Activated T-helper 1 cell treated with anti-CD3 and anti-CD28 coated beads, Interleukin-12 subunit alpha, Interleukin-12 subunit beta, Interleukin-2, Interleukin-4 antibody, amounts not matched to agents 30 ng/mL and 10 ng/mL and 1 ng/mL, durations not matched to agents 14 hours and 24 hours and 36 hours (primary cell): ENCODE measurements at regions of chr13 and their contacts with region 1.

Region 1: DNA sequence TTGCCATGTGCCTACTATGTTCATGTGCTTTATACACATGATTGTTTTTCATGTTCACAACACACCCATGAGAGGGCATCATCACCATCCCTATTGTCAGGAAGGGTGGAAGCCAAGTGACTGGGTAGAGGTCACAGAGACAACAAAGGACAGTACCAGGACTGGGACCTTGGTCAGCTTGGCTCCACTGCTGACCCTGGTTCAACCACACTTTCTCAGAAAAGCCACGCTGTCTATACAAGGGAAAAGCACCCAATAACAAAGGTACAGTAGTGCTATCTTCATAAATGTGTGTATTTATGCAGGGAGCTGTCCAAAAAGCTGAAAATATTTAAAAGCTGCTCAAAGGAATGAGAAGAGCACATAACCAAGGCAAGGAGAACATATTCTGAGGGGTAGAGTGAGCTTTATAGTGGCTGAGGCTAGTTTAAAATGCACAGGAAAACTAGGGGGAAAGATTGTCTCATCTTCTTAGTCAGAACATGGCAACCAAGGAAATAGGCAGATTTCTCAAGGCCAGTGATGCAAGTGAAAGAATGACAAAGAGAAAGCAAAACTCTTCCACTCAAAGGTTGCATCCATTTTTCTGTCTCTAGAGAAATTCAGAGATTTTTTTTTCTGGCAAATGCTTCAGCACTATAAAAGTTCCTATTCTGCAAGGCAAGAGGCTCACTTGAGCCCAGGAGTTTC is 415.0 kb downstream of the FOXO1 start:
- DNase-seq: peak; percentile 4
- H3K4me3 Mint-ChIP-seq: no peak overlapping the region
- H3K27ac Mint-ChIP-seq: peak overlapping the region; percentile 78
- H3K4me1 Mint-ChIP-seq: peaks cover 39% of the 10 kb centered on the region
- H3K27me3 Mint-ChIP-seq: no peaks in the 10 kb centered on the region

Region 2: DNA sequence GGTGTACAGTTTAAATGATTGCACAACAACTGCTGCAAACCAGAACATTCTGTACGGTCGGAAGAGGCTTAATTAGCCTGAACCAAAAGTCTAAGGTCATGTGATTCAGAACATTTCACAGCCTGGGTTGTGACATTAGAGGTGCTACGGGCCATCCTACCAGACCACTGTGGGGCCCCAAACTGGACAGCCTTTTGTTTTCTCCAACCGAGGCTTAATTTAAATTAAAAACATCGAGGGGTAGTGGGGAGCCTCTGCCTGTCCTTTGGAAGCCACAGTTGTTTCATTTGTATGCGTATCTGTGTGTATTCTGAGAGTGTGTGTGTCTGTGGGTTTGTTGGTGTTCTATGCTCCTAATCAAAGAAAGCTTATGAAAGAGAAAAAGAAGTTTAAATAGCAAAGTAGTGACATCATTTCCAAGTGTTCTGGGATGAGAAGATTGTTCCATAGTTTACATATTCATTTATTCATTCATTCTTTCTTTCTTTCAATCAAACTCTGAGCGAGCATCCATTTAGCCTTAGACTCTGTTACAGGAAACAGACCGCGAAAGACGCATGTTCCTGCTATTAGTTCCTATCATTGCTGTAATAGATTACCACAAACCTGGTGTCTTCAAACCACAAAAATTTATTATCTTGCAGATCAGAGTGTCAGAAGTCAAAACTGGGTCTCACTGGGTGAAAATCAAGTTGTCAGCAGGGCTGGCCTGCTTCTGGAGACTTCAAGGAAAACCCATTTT is 29.9 kb before region 1 on chr13:
- intact Hi-C with region 1: loop called (anchors 1 kb)
- DNase-seq: no peak
- H3K4me3 Mint-ChIP-seq: peak overlapping the region; percentile 37
- H3K27ac Mint-ChIP-seq: peak overlapping the region; percentile 69
- H3K4me1 Mint-ChIP-seq: peaks cover 43% of the 10 kb centered on the region
- H3K27me3 Mint-ChIP-seq: no peaks in the 10 kb centered on the region

Region 3: DNA sequence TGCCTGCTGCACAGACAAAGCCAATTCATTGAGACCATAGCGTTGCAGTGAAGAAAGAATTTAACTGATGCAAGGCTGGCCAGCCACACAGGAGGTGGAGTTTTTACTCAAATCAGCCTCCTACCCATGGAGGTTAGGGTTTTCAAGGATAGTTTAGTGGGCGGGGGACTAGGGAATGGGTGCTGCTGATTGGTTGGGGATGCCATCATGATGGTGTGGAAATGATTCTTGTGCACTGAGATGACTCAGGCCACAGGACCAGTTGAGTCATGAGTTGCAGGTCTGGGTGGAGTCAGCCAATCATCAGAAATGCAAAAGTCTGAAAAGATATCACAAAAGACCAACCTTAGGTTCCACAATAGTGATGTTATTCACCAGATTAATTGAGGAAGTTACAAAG is 55.3 kb after region 1 on chr13:
- intact Hi-C with region 1: loop called (anchors 2 kb)
- DNase-seq: no peak
- H3K4me3 Mint-ChIP-seq: peak overlapping the region; percentile 1
- H3K27ac Mint-ChIP-seq: peak overlapping the region; percentile 1
- H3K4me1 Mint-ChIP-seq: peaks cover 25% of the 10 kb centered on the region
- H3K27me3 Mint-ChIP-seq: no peaks in the 10 kb centered on the region

Region 4: GRCh38 chr13:40318366-40318765 is 66.9 kb after region 1 on chr13:
- intact Hi-C with region 1: loop called (anchors 2 kb)
- DNase-seq: no peak
- H3K4me3 Mint-ChIP-seq: no peak overlapping the region
- H3K27ac Mint-ChIP-seq: no peak overlapping the region
- H3K4me1 Mint-ChIP-seq: peaks cover 70% of the 10 kb centered on the region
- H3K27me3 Mint-ChIP-seq: no peaks in the 10 kb centered on the region

Region 5: GRCh38 chr13:40438999-40439797 is 187.7 kb after region 1 on chr13:
- intact Hi-C with region 1: loop called (anchors 1 kb)
- DNase-seq: no peak
- H3K4me3 Mint-ChIP-seq: peak overlapping the region; percentile 23
- H3K27ac Mint-ChIP-seq: peak overlapping the region; percentile 73
- H3K4me1 Mint-ChIP-seq: peaks cover 33% of the 10 kb centered on the region
- H3K27me3 Mint-ChIP-seq: peaks cover 2% of the 10 kb centered on the region

Region 6: GRCh38 chr13:40597740-40598370 is 346.4 kb after region 1 on chr13:
- intact Hi-C with region 1: no loop called
- DNase-seq: no peak
- H3K4me3 Mint-ChIP-seq: peak overlapping the region; percentile 6
- H3K27ac Mint-ChIP-seq: peak overlapping the region; percentile 10
- H3K4me1 Mint-ChIP-seq: peaks cover 75% of the 10 kb centered on the region
- H3K27me3 Mint-ChIP-seq: no peaks in the 10 kb centered on the region